ENCODE measurements at regions of chr5 and their contacts with region 1.

Region 1: GRCh38 chr5:160021831-160022446 is 13.0 kb downstream of the TTC1 start:
- DNase-seq: peak; percentile 64
- H3K4me3 Mint-ChIP-seq: no peak overlapping the region
- H3K27ac Mint-ChIP-seq: no peak overlapping the region
- H3K4me1 Mint-ChIP-seq: peaks cover 17% of the 10 kb centered on the region
- H3K27me3 Mint-ChIP-seq: no peaks in the 10 kb centered on the region

Region 2: GRCh38 chr5:160008877-160009590 is 12.9 kb before region 1 on chr5 and contains the start of gene TTC1:
- CTCF ChIA-PET with region 1: interaction called, 18 read pairs
- DNase-seq: peak; percentile 96
- H3K4me3 Mint-ChIP-seq: peak within 1 kb of the TSS; percentile 90
- H3K27ac Mint-ChIP-seq: peak within 1 kb of the TSS; percentile 97
- H3K4me1 Mint-ChIP-seq: peaks cover 26% of the 10 kb centered on the region
- H3K27me3 Mint-ChIP-seq: no peaks in the 10 kb centered on the region